Activated naive CD4-positive, alpha-beta T cell treated with anti-CD3 and anti-CD28 coated beads, Interleukin-2, amount 10 ng/mL, durations not matched to agents 7 days and 5 days (primary cell): ENCODE measurements at regions of chr6 and their contacts with region 1.

Region 1: DNA sequence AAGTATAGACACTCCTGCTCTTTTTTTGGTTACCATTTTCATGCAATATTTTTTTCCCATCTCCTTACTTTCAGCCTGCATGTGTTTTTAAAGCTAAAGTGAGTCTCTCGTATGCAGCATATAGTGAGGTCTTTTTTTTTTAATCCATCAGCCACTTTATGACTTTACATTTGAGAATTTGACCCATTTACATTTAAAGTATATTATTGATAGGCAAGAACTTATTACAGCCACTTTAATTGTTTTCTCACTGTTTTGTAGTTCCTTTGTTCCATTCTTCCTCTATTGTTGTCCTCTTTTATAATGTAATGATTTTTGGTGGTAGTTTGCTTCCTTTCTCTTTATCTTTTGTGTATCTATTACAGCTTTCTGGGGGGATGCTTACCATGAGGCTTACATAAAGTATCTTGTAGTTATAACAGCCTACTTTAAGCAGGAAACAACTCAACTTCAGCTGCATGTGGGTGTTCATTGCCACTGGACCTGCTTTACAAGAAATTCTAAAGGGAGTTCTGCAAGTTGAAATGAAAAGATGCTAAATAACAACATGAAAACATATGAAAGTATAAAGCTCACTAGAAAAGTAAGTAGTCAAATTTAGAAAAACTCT is 71.8 kb downstream of the TNFAIP3 start:
- DNase-seq: no peak
- H3K4me3 Mint-ChIP-seq: no peak overlapping the region
- H3K27ac Mint-ChIP-seq: no peak overlapping the region
- H3K4me1 Mint-ChIP-seq: peaks cover 14% of the 10 kb centered on the region
- H3K27me3 Mint-ChIP-seq: no peaks in the 10 kb centered on the region

Region 2: GRCh38 chr6:137910424-137910834 is 28.4 kb before region 1 on chr6:
- CTCF ChIA-PET with region 1: interaction called, 11 read pairs
- DNase-seq: no peak
- H3K4me3 Mint-ChIP-seq: no peak overlapping the region
- H3K27ac Mint-ChIP-seq: no peak overlapping the region
- H3K4me1 Mint-ChIP-seq: peaks cover 41% of the 10 kb centered on the region
- H3K27me3 Mint-ChIP-seq: peaks cover 9% of the 10 kb centered on the region

Region 3: DNA sequence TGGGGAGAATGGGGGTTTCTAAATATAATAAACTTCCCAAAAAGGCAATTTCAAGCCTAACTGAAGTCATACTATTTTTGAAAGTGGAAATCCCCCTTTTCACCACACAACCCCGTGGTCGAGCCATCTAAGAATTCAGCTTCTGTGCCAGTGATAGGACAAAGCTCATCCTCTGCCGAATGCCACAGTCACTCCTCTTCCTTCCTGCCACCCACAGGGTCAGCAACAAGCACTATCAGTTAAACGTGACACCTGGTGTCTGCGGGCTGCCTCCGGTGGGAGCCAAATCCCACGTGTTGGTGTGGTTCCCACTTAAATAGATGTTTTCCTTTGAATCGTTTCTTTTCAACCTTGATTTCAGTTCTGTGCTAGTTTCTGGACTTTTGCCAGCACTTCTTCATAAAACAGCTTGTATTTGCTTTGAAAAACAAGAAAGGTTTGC is 11.1 kb before region 1 on chr6:
- CTCF ChIA-PET with region 1: interaction called, 16 read pairs
- DNase-seq: peak; percentile 81
- H3K4me3 Mint-ChIP-seq: peak overlapping the region; percentile 42
- H3K27ac Mint-ChIP-seq: peak overlapping the region; percentile 83
- H3K4me1 Mint-ChIP-seq: peaks cover 37% of the 10 kb centered on the region
- H3K27me3 Mint-ChIP-seq: no peaks in the 10 kb centered on the region

Region 4: DNA sequence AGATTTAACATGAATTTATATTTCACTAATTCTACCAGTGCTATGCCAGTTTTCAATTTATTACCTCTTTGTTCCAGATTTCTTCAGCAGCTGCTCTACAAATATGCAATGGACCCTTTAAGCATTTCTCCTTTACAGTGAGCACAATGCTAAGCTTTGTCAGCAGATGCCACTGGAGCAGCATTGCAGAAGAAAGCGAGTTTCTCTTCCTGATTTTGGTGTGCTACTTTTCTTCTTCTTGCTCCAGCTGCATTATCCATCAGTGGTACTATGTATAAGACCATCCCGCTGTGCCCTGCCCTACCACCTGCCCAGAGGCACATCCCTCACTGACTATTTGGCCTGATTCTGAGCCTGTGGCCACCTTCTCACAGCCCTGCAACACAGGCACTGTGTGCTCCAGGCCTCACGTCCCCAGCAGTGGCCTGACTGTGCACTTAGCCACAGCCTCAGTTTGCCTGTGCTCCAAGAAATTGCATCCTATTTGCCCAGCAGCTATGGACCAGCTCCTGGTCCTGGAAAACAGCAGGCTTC is 12.3 kb after region 1 on chr6:
- CTCF ChIA-PET with region 1: interaction called, 13 read pairs
- DNase-seq: no peak
- H3K4me3 Mint-ChIP-seq: no peak overlapping the region
- H3K27ac Mint-ChIP-seq: no peak overlapping the region
- H3K4me1 Mint-ChIP-seq: peaks cover 17% of the 10 kb centered on the region
- H3K27me3 Mint-ChIP-seq: peaks cover 8% of the 10 kb centered on the region